Ovary (tissue), 10 donors: ENCODE measurements at regions of chr16 and their contacts with region 1.

Region 1: DNA sequence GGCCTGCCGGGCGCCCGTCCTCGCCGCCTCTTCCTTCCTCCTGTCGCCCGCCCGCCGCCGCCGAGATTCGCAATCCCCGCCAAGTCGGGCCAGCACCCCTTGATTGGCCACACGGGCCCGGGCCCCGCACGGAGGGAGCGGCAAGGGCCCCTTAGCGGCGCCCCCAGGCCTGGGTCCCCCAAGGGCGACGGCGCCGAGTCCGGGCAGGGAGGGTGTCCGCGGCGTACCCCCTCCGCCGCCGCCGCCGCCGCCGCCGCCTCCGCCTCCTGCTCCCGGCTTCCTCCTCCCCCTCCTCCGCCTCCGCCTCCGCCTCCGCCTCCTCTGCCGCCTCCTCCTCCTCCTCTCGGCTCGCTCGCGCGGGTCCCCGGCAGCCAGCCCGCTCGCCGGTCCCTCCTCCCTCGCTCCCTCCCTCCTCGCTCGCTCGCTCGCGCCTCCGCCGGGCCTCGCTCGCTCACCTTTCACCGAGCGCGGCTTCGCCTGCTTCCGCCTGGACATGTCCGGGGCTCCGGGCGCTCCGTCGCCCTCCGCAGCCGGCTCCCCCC is 561 bp downstream of the ZNF423 start:
- DNase-seq: peak; percentile 89 to 92 (median 90)
- H3K4me3 ChIP-seq: peak overlapping the region; percentile 85
- H3K27ac ChIP-seq: peak overlapping the region; percentile 69 to 95
- H3K4me1 ChIP-seq: peaks cover 4% of the 10 kb centered on the region
- H3K27me3 ChIP-seq: no peaks in the 10 kb centered on the region
- CTCF ChIP-seq: no peak
- EP300 ChIP-seq: no peak
- POLR2A ChIP-seq: peak; percentile 76

Region 2: DNA sequence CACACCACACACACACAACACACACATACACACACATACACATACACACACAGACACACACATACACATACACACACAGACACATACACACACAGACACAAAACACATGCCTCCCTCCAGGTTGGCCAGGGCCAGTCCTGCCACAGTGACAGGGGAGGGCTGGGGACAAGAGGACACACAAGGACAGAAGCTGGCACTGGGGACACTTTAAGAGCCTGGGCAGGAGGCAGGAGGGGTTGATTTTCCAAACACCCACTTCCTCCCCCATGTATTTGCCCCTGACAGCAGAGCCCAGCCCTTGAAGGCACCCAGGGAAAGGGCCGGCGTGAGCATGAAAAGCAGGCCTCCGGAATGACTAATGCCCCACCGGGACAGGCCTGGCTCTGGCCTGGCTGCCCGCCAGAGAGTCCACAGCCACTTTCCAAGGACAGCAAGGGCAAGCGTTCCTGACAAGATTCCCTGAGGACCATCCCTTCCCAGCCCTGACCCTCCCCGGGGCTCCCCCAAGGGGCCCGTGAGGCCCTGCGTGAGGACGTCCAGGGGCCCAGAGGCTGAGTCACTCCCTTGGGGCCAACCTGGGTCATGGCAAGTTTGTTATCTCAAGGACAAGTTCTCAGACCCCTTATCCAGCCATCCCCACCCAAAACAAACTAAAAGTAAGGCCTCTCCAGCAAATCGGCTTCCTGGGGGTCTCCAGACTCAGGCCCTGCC is 235.0 kb before region 1 on chr16:
- intact Hi-C with region 1: loop called in 1 of 4 experiments (anchors 5 kb)
- DNase-seq: peak; percentile 82 to 92 (median 90)
- H3K4me3 ChIP-seq: no peak overlapping the region
- H3K27ac ChIP-seq: peak overlapping the region; percentile 17 to 83
- H3K4me1 ChIP-seq: peaks cover 19% of the 10 kb centered on the region
- H3K27me3 ChIP-seq: no peaks in the 10 kb centered on the region
- CTCF ChIP-seq: no peak
- EP300 ChIP-seq: no peak
- POLR2A ChIP-seq: no peak

Region 3: DNA sequence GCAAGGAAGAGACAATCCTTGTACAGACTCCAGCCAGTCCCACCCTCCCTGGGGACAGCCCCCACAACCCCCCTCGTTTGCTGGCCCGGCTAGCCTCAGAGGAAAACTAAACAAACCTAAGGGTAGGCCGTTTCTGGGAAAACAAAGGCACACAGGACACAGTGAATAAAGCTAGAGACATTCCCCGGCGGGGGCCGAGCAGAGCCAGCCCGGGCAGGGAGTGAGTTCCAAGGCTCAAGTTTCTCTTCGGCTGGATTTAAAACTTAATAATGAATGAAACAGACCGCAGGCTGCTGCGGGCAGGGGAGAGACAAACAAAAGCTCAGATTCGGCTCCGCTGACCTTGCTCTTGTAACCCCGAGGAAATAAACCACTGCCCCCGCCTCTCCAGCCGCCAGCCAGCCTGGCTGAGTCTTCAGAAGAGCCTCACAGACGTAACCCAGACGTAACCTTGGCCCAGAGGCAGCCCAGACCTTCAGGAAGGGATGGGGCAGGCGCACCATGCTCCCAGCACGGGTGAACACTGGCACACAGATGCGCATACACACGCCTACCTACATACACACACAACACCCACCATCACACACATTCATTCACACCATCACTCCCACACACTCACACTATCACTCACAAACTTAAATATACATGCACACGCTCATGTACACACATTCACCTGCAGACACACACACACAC is 215.5 kb before region 1 on chr16:
- intact Hi-C with region 1: loop called in 1 of 4 experiments (anchors 5 kb)
- DNase-seq: peak; percentile 82 to 92 (median 88)
- H3K4me3 ChIP-seq: peak overlapping the region; percentile 13
- H3K27ac ChIP-seq: peak overlapping the region in 1 of 2 donors; percentile 69
- H3K4me1 ChIP-seq: peaks cover 34% of the 10 kb centered on the region
- H3K27me3 ChIP-seq: no peaks in the 10 kb centered on the region
- CTCF ChIP-seq: no peak
- EP300 ChIP-seq: no peak
- POLR2A ChIP-seq: no peak

Region 4: GRCh38 chr16:49701789-49702494 is 153.4 kb before region 1 on chr16:
- intact Hi-C with region 1: loop called in 1 of 4 experiments (anchors 5 kb)
- DNase-seq: peak; percentile 81 to 84 (median 83)
- H3K4me3 ChIP-seq: no peak overlapping the region
- H3K27ac ChIP-seq: peak overlapping the region in 1 of 2 donors; percentile 90
- H3K4me1 ChIP-seq: peaks cover 26% of the 10 kb centered on the region
- H3K27me3 ChIP-seq: no peaks in the 10 kb centered on the region
- CTCF ChIP-seq: no peak
- EP300 ChIP-seq: no peak
- POLR2A ChIP-seq: no peak

Region 5: DNA sequence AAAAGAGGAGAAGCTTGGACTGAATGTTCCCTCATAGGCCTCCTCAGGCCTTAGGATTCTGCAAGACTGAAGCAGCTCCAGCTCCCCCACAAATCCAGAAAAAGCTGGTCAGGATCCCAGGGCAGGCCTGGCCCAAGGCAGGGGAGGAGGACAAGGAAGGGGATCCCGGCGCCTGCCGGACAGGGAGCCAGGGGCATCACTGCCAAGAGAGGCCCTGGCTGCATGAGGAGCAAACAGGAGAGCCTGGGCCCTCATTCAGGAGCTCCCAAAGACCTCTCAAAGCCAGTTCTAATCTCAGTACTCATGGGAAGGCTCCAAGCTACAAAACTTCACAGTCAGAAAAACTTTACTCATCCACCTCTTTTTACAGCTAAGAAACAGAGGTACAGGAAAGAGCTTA is 66.8 kb before region 1 on chr16:
- intact Hi-C with region 1: loop called in 1 of 4 experiments (anchors 10 kb)
- DNase-seq: peak; percentile 61 to 83 (median 65)
- H3K4me3 ChIP-seq: no peak overlapping the region
- H3K27ac ChIP-seq: peak overlapping the region in 1 of 2 donors; percentile 30
- H3K4me1 ChIP-seq: peaks cover 6% of the 10 kb centered on the region
- H3K27me3 ChIP-seq: no peaks in the 10 kb centered on the region
- CTCF ChIP-seq: no peak
- EP300 ChIP-seq: no peak
- POLR2A ChIP-seq: no peak